Posterior vena cava (tissue), 2 donors: ENCODE measurements at regions of chr7 and their contacts with region 1.

Region 1: DNA sequence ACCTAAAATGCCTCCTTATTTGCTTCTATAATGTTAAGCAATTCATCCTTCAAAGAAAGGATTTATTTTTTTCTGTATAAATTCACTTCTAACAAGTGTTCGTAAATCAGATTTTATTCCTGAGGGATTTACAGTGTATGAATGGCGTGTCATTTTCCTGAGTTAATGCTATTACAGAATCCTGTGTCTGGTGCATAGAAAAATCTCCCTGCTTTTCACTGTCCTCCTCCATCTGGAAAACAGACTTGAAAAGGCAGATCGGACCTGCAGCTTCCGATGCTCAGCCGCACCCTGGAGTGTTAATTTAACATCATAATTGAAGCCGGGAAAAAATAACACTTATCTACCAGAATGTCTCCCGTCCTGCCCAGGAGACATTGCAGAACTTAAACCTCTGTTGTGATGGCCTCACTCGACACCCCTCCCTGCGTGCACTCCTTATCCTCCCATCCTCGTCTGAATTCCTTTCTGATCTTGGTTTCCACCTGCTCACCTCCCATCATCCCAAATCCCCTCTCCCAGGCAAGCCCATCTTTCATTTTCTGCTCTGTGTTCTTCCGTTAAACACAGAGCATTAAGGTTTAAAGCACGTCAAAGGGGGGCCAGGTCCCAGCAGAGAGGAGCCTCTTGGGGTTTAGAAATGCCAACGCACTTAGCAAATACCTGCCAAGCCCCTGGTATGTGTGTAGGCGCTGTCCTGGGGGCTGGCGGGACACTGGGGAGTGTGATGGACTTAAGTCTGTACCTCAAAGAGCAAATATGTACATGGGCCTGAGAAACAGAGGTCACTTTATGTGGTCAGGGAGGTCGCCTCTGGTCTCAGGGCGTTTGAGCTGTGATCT is 441.9 kb upstream of the FOXK1 start:
- DNase-seq: peak; percentile 58

Region 2: GRCh38 chr7:4260867-4261600 is 20.8 kb after region 1 on chr7:
- intact Hi-C with region 1: loop called in 1 of 2 experiments (anchors 2 kb)
- DNase-seq: peak; percentile 79